GM12878 (cell line): ENCODE measurements at regions of chr15 and their contacts with region 1.

Region 1: DNA sequence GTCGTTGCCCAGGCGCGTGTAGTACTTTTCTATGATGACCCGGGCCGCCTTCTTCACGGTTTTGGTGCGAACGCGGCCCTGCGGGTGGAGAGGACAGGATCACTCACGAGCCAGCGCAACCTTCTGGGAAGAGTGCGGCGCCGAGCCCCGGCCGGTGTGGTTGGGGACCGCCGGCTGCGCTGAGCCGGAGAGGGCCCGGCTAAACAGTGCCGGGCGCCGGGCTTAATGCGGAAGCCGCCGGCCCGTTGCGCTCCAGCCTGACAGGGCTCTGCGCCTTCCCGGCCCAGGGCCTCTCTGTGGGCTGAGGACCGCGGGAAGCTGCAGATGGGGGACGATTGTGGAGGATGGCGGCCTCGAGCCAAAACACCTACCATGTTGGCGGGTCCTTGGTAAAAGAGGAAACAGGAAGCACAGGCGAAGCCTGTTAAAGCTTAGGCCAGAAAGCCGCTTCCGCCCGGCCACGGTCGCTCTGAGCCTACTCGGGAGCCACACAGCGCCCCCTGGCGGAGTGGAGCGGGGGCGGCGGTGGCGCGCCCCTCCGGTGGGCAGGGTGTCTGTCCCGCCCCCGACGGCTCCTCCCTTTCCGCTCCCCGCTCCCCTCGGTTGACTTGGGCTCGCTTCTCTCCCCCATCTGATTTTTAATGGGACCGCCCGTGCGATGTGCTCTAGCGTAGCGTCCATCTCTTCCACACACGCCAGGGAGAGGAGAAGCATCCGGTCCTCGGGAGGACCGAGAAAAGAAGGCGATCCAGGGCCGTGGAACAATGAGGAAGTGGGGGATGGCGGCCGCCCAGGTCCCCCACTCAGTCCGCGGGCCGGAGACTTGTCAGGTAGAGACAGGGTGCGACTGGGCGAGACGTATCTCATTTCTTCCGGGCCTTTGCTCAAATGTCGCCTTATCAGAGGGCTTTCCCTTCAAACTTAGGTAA is at the start of gene RPS17:
- DNase-seq: peak; percentile 85
- ATAC-seq: peak; percentile 95
- H3K4me3 ChIP-seq: peak within 1 kb of the TSS; percentile 99
- H3K27ac ChIP-seq: peak within 1 kb of the TSS; percentile 91
- H3K4me1 ChIP-seq: 0 out of 2 replicates have a peak, but pooled peaks cover 2% of the 10 kb centered on the region
- H3K27me3 ChIP-seq: no peaks in the 10 kb centered on the region
- CTCF ChIP-seq: peak; percentile 97 to 100 (median 97); a peak in 5 of 6 replicates
- EP300 ChIP-seq: peak; percentile 30 to 52; a peak in 2 of 4 replicates
- POLR2A ChIP-seq: peak; percentile 100
- RAD21 ChIP-seq: peak; percentile 14; the same call in 1 of the 2 replicates
- polyA plus RNA-seq, gene RPS17: 2,736 to 3,665 TPM

Region 2: GRCh38 chr15:82571722-82572222 is 31.5 kb after region 1 on chr15:
- CTCF ChIA-PET with region 1: no interaction called
- POLR2A ChIA-PET with region 1: no interaction called
- RAD21 ChIA-PET with region 1: no interaction called
- SMC1A ChIA-PET with region 1: no interaction called
- in situ Hi-C with region 1: no loop called
- intact Hi-C with region 1: no loop called
- DNase-seq: no peak
- ATAC-seq: no peak
- H3K4me3 ChIP-seq: no peak overlapping the region
- H3K27ac ChIP-seq: no peak overlapping the region
- H3K4me1 ChIP-seq: no peaks in the 10 kb centered on the region
- H3K27me3 ChIP-seq: peaks cover 5 to 12% of the 10 kb centered on the region in 2 experiments; a peak in 3 of 4 replicates
- CTCF ChIP-seq: no peak
- EP300 ChIP-seq: no peak
- POLR2A ChIP-seq: no peak
- RAD21 ChIP-seq: no peak

Region 3: GRCh38 chr15:82597815-82598214 is 57.5 kb after region 1 on chr15:
- CTCF ChIA-PET with region 1: no interaction called
- POLR2A ChIA-PET with region 1: no interaction called
- RAD21 ChIA-PET with region 1: no interaction called
- SMC1A ChIA-PET with region 1: no interaction called
- in situ Hi-C with region 1: no loop called
- intact Hi-C with region 1: no loop called
- DNase-seq: no peak
- ATAC-seq: no peak
- H3K4me3 ChIP-seq: no peak overlapping the region
- H3K27ac ChIP-seq: no peak overlapping the region
- H3K4me1 ChIP-seq: no peaks in the 10 kb centered on the region
- H3K27me3 ChIP-seq: 0 out of 4 replicates have a peak, but pooled peaks cover 0 to 2% of the 10 kb centered on the region in 2 experiments
- CTCF ChIP-seq: no peak
- EP300 ChIP-seq: no peak
- POLR2A ChIP-seq: no peak
- RAD21 ChIP-seq: no peak

Region 4: GRCh38 chr15:82749951-82750830 is 209.9 kb after region 1 on chr15:
- CTCF ChIA-PET with region 1: interaction called, 9 read pairs
- POLR2A ChIA-PET with region 1: interaction called, 11 read pairs
- RAD21 ChIA-PET with region 1: interaction called, 6 read pairs
- SMC1A ChIA-PET with region 1: interaction called, 7 read pairs
- in situ Hi-C with region 1: no loop called
- intact Hi-C with region 1: no loop called
- DNase-seq: peak; percentile 57
- ATAC-seq: peak; percentile 96
- H3K4me3 ChIP-seq: peak overlapping the region; percentile 87
- H3K27ac ChIP-seq: peak overlapping the region; percentile 90
- H3K4me1 ChIP-seq: peaks cover 7% of the 10 kb centered on the region; the same call in 1 of the 2 replicates
- H3K27me3 ChIP-seq: no peaks in the 10 kb centered on the region
- CTCF ChIP-seq: no peak
- EP300 ChIP-seq: 0 out of 4 replicates have a peak, but pooled peaks have one; percentile 15 to 17
- POLR2A ChIP-seq: peak; percentile 96
- RAD21 ChIP-seq: no peak

Region 5: GRCh38 chr15:82832601-82833361 is 292.5 kb after region 1 on chr15:
- CTCF ChIA-PET with region 1: no interaction called
- POLR2A ChIA-PET with region 1: no interaction called
- RAD21 ChIA-PET with region 1: no interaction called
- SMC1A ChIA-PET with region 1: no interaction called
- in situ Hi-C with region 1: loop called (anchors 10 kb)
- intact Hi-C with region 1: loop called (anchors 10 kb)
- DNase-seq: peak; percentile 53
- ATAC-seq: peak; percentile 90
- H3K4me3 ChIP-seq: 0 out of 2 replicates have a peak overlapping the region, but pooled peaks have one; percentile 28
- H3K27ac ChIP-seq: peak overlapping the region; percentile 30
- H3K4me1 ChIP-seq: peaks cover 18% of the 10 kb centered on the region
- H3K27me3 ChIP-seq: no peaks in the 10 kb centered on the region
- CTCF ChIP-seq: no peak
- EP300 ChIP-seq: peak in 1 of 2 experiments; percentile 65; a peak in 2 of 4 replicates
- POLR2A ChIP-seq: no peak
- RAD21 ChIP-seq: no peak

Region 6: DNA sequence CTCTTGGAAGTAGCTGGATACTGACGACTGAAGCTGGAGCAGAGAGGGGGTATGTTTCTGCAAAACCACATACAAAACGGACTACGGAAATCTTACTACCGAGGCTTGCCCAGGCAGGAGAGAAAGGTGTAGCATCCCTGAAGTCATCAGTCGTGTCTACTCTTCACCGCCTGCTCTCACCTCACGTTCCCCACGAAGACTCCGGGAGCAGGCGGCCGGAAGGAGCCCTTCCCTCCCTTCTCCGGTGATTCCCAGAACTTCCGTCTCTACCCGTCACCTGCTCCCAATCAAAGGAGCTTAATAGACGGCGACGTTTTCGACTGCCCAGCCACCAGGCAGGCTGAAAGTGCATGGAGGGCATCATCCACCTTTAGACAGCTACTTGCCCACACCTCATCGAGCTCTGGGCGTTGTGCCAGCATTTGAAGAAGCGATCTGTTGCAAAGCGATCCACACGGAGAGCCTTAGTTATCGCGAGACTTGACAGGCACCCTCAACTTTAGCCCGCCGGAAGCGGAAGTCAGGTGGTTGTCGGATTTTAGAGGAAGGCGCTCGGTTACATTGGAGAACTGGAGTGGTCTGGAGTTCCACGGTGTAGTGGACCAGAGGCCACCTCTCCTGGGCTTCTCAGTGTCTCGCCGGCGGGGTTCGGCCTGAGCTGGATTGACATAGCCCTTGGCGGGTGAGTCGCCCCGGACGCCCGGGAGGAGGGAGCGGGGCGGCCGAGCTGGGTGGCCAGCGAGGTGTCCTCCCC is 445.5 kb after region 1 on chr15 and contains the start of gene RAMAC:
- CTCF ChIA-PET with region 1: interaction called, 5 read pairs
- POLR2A ChIA-PET with region 1: interaction called, 6 read pairs
- RAD21 ChIA-PET with region 1: no interaction called
- SMC1A ChIA-PET with region 1: interaction called, 3 read pairs
- in situ Hi-C with region 1: loop called (anchors 5 kb)
- intact Hi-C with region 1: no loop called
- DNase-seq: peak; percentile 93
- ATAC-seq: peak; percentile 97
- H3K4me3 ChIP-seq: peak within 1 kb of the TSS; percentile 84
- H3K27ac ChIP-seq: peak within 1 kb of the TSS; percentile 71
- H3K4me1 ChIP-seq: peaks cover 8% of the 10 kb centered on the region
- H3K27me3 ChIP-seq: no peaks in the 10 kb centered on the region
- CTCF ChIP-seq: no peak
- EP300 ChIP-seq: no peak
- POLR2A ChIP-seq: peak; percentile 88
- RAD21 ChIP-seq: no peak
- polyA plus RNA-seq, gene RAMAC: 79.3 to 109 TPM

Region 7: DNA sequence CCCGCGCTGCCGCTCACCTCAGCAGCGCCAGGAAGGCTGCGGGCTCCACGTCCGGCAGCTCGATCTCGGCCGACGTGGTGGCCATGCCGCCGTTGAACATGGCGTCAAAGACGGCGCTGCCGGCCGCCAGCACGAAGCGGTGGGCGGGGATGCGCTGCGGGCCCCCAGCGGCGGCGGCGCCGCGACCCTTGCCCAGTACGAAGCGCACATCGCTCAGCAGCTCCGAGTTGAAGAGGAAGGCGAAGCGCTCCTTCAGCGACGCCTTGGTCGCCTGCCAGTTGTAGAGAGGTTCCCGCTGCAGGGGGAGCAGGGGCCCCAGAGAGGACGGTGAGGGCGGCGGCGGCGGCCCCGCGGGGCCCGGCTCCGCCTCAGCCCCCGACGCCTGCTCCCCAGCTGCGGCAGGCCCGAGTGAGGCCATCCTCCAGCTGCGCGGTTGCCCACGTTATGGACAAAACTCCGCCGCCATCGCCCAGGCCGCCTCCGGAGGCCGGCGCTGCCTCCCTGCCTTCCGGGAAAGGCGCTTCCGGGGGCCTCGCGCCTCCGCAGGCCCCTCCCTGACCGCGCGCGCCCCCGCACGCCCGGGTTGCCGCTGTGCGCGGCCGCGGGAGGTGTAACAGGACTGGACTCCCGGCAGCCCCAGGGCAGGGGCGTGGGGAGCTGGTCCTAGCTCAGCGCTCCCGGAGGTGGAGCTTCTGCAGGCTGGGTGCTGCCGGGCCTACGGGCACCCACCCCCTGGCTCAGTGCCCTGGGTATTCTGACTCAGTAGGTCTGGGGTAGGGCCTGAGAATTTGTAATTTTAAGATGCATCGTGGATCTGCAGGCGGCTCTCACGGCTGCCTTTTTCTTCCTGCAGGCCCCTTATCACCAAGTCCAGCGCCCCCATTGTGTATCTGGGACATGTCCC is 526.7 kb after region 1 on chr15 and contains the start of gene BTBD1:
- CTCF ChIA-PET with region 1: no interaction called
- POLR2A ChIA-PET with region 1: no interaction called
- RAD21 ChIA-PET with region 1: no interaction called
- SMC1A ChIA-PET with region 1: interaction called, 3 read pairs
- in situ Hi-C with region 1: no loop called
- intact Hi-C with region 1: loop called (anchors 5 kb)
- DNase-seq: peak; percentile 60
- ATAC-seq: peak; percentile 88
- H3K4me3 ChIP-seq: peak within 1 kb of the TSS; percentile 96
- H3K27ac ChIP-seq: peak within 1 kb of the TSS; percentile 93
- H3K4me1 ChIP-seq: peaks cover 21% of the 10 kb centered on the region
- H3K27me3 ChIP-seq: no peaks in the 10 kb centered on the region
- CTCF ChIP-seq: 0 out of 6 replicates have a peak, but pooled peaks of 2 of the 3 experiments have one; percentile 1 to 9
- EP300 ChIP-seq: no peak
- POLR2A ChIP-seq: peak; percentile 97
- RAD21 ChIP-seq: 0 out of 2 replicates have a peak, but pooled peaks have one; percentile 4
- polyA plus RNA-seq, gene BTBD1: 17.5 to 38.9 TPM

Region 8: GRCh38 chr15:83185561-83185960 is 645.2 kb after region 1 on chr15:
- CTCF ChIA-PET with region 1: no interaction called
- POLR2A ChIA-PET with region 1: no interaction called
- RAD21 ChIA-PET with region 1: no interaction called
- SMC1A ChIA-PET with region 1: no interaction called
- in situ Hi-C with region 1: loop called (anchors 10 kb)
- intact Hi-C with region 1: no loop called
- DNase-seq: no peak
- ATAC-seq: no peak
- H3K4me3 ChIP-seq: no peak overlapping the region
- H3K27ac ChIP-seq: no peak overlapping the region
- H3K4me1 ChIP-seq: no peaks in the 10 kb centered on the region
- H3K27me3 ChIP-seq: no peaks in the 10 kb centered on the region
- CTCF ChIP-seq: no peak
- EP300 ChIP-seq: no peak
- POLR2A ChIP-seq: no peak
- RAD21 ChIP-seq: no peak